CD4-positive, alpha-beta memory T cell (primary cell): ENCODE measurements at regions of chr1 and their contacts with region 1.

Region 1: GRCh38 chr1:1890506-1891348 is at the start of gene GNB1:
- DNase-seq: peak; percentile 82 to 95 (median 93)
- H3K4me3 ChIP-seq: peak within 1 kb of the TSS; percentile 74 to 76
- H3K4me3 Mint-ChIP-seq: peak within 1 kb of the TSS; percentile 81 to 95 (median 91)
- H3K27ac ChIP-seq: peak within 1 kb of the TSS; percentile 91
- H3K27ac Mint-ChIP-seq: peak within 1 kb of the TSS; percentile 93 to 99 (median 97)
- H3K4me1 ChIP-seq: peaks cover 66% of the 10 kb centered on the region
- H3K4me1 Mint-ChIP-seq: peaks cover 29 to 72% (median 51%) of the 10 kb centered on the region in 4 donors
- H3K27me3 ChIP-seq: no peaks in the 10 kb centered on the region
- H3K27me3 Mint-ChIP-seq: peaks cover 0 to 4% of the 10 kb centered on the region in 2 donors
- total RNA-seq, gene GNB1: 257 to 276 TPM

Region 2: GRCh38 chr1:975896-976683 is 914.6 kb before region 1 on chr1:
- CTCF ChIA-PET with region 1: no interaction called
- POLR2A ChIA-PET with region 1: no interaction called
- intact Hi-C with region 1: no loop called
- DNase-seq: peak; percentile 59 to 70 (median 64)
- H3K4me3 ChIP-seq: peak overlapping the region in 1 of 2 donors; percentile 9
- H3K4me3 Mint-ChIP-seq: peak overlapping the region in 5 of 8 donors; percentile 6 to 36 (median 23)
- H3K27ac ChIP-seq: no peak overlapping the region
- H3K27ac Mint-ChIP-seq: peak overlapping the region in 1 of 7 donors; percentile 16
- H3K4me1 ChIP-seq: peaks cover 9% of the 10 kb centered on the region
- H3K4me1 Mint-ChIP-seq: peaks cover 3 to 12% (median 5%) of the 10 kb centered on the region in 4 donors
- H3K27me3 ChIP-seq: no peaks in the 10 kb centered on the region
- H3K27me3 Mint-ChIP-seq: peaks cover 2 to 8% of the 10 kb centered on the region in 2 donors

Region 3: GRCh38 chr1:1777950-1778662 is 112.6 kb before region 1 on chr1 and contains the start of gene NADK:
- CTCF ChIA-PET with region 1: interaction called, 4 read pairs
- POLR2A ChIA-PET with region 1: interaction called, 10 read pairs
- intact Hi-C with region 1: no loop called
- DNase-seq: peak; percentile 69 to 84 (median 78)
- H3K4me3 ChIP-seq: peak within 1 kb of the TSS; percentile 36 to 72
- H3K4me3 Mint-ChIP-seq: peak within 1 kb of the TSS; percentile 86 to 96 (median 88)
- H3K27ac ChIP-seq: peak within 1 kb of the TSS; percentile 78
- H3K27ac Mint-ChIP-seq: peak within 1 kb of the TSS; percentile 93 to 98 (median 95)
- H3K4me1 ChIP-seq: peaks cover 69% of the 10 kb centered on the region
- H3K4me1 Mint-ChIP-seq: peaks cover 47 to 67% (median 58%) of the 10 kb centered on the region in 4 donors
- H3K27me3 ChIP-seq: no peaks in the 10 kb centered on the region
- H3K27me3 Mint-ChIP-seq: no peaks in the 10 kb centered on the region
- total RNA-seq, gene NADK: 48.9 to 56.0 TPM

Region 4: GRCh38 chr1:1826356-1827088 is 64.2 kb before region 1 on chr1:
- CTCF ChIA-PET with region 1: no interaction called
- POLR2A ChIA-PET with region 1: interaction called, 4 read pairs
- intact Hi-C with region 1: loop called (anchors 10 kb)
- DNase-seq: no peak
- H3K4me3 ChIP-seq: no peak overlapping the region
- H3K4me3 Mint-ChIP-seq: no peak overlapping the region
- H3K27ac ChIP-seq: no peak overlapping the region
- H3K27ac Mint-ChIP-seq: peak overlapping the region; percentile 8 to 80 (median 52)
- H3K4me1 ChIP-seq: peaks cover 18% of the 10 kb centered on the region
- H3K4me1 Mint-ChIP-seq: peaks cover 21 to 38% (median 34%) of the 10 kb centered on the region in 4 donors
- H3K27me3 ChIP-seq: no peaks in the 10 kb centered on the region
- H3K27me3 Mint-ChIP-seq: no peaks in the 10 kb centered on the region

Region 5: DNA sequence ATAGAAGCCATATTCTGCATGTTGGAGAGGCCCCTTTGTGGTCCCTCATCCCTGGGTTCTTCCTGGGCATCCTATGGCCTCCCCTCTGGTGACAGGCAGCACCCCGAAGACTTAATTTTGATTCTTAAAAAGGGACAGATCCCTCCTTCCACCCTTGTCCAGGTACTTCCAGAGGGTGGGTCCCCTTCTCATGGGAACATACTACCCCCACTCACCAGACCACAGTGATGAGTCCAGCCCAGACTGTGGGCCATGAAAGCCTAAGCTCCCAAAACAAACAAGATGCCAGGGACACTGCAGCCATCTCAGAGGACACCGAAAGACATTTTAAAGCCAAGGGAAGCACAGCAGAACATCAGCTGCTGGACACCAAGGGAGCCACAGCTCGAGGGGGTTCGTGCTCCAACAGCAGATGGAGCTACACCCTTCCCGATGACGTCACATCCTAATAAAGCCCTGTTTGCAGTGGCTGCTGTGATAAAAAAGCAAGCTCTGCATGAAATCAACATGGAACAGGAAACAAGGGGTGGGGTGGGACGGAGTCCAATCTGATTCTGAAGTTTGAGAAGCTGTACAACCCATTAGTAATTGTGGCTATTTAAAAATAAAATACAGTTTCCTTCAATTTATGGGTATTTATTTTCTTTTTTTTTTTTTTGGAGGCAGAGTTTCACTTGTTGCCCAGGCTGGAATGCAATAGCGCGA is 32.2 kb before region 1 on chr1:
- CTCF ChIA-PET with region 1: no interaction called
- POLR2A ChIA-PET with region 1: interaction called, 4 read pairs
- intact Hi-C with region 1: loop called (anchors 5 kb)
- DNase-seq: peak; percentile 39 to 61 (median 47)
- H3K4me3 ChIP-seq: no peak overlapping the region
- H3K4me3 Mint-ChIP-seq: peak overlapping the region in 7 of 8 donors; percentile 44 to 62 (median 55)
- H3K27ac ChIP-seq: peak overlapping the region; percentile 49
- H3K27ac Mint-ChIP-seq: peak overlapping the region; percentile 73 to 95 (median 89)
- H3K4me1 ChIP-seq: peaks cover 88% of the 10 kb centered on the region
- H3K4me1 Mint-ChIP-seq: peaks cover 49 to 88% (median 70%) of the 10 kb centered on the region in 4 donors
- H3K27me3 ChIP-seq: no peaks in the 10 kb centered on the region
- H3K27me3 Mint-ChIP-seq: no peaks in the 10 kb centered on the region